ENCODE measurements at regions of chr3 and their contacts with region 1.

Region 1: DNA sequence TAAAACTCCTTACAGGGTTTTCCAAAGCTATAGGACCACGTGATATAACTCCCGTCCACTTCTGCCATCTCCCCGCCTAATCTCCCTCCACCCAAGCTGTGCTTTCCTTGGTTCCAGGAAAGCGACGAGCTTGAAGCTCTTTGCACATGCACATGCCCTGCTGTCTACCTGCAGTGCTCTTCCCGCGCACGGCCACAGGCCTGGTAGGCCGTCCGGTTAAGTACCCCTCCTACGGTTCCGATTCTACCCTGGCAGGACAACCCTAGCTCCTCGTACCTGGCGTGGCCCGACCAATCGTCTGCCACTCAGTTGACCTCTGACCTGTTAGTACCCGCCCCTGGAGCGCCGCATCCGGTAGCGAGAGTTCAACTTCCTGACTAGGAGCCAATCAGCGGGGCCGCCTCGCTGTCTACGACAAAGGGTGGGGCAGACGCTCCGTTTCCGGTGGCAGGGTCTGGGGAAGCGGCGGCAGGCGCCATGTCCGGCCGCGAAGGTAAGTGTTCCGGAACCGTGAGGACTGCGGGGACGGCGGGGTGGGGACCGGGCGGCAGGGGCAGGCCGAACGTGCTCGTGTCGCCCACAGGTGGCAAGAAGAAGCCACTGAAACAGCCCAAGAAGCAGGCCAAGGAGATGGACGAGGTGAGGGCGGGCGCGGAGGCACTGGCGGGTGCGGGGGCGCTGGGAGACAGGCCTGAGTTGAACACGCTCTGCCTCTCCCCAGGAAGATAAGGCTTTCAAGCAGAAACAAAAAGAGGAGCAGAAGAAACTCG is at the starts of genes CCDC51 and TMA7:
- H3K4me3 ChIP-seq: peak within 1 kb of the TSS; percentile 84
- H3K27ac ChIP-seq: peak within 1 kb of the TSS; percentile 67
- H3K4me1 ChIP-seq: no peaks in the 10 kb centered on the region
- CTCF ChIP-seq: peak; percentile 48; the same call in 1 of the 2 replicates

Region 2: DNA sequence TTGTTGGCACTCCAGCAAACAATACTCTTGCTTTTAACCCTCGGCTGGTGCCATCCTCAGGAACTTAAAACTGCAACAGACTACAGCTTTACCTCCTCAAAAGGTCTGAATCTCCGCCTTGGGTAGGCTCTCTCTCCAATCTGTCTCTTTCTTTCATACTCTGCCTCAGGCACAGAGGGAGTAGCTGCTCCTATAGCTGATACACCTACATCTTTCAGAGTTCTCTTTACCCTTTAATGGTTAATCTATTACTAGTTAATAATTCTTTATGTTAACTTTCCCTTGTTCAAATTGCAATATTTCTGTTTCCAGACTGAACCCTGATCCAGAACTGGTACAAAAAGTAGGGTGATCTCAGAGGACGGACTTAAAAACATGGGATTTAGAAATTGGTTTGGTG is 490.0 kb before region 1 on chr3:
- CTCF ChIA-PET with region 1: no interaction called
- POLR2A ChIA-PET with region 1: no interaction called
- H3K4me3 ChIP-seq: no peak overlapping the region
- H3K27ac ChIP-seq: no peak overlapping the region
- H3K4me1 ChIP-seq: 0 out of 2 replicates have a peak, but pooled peaks cover 1% of the 10 kb centered on the region
- CTCF ChIP-seq: no peak

Region 3: DNA sequence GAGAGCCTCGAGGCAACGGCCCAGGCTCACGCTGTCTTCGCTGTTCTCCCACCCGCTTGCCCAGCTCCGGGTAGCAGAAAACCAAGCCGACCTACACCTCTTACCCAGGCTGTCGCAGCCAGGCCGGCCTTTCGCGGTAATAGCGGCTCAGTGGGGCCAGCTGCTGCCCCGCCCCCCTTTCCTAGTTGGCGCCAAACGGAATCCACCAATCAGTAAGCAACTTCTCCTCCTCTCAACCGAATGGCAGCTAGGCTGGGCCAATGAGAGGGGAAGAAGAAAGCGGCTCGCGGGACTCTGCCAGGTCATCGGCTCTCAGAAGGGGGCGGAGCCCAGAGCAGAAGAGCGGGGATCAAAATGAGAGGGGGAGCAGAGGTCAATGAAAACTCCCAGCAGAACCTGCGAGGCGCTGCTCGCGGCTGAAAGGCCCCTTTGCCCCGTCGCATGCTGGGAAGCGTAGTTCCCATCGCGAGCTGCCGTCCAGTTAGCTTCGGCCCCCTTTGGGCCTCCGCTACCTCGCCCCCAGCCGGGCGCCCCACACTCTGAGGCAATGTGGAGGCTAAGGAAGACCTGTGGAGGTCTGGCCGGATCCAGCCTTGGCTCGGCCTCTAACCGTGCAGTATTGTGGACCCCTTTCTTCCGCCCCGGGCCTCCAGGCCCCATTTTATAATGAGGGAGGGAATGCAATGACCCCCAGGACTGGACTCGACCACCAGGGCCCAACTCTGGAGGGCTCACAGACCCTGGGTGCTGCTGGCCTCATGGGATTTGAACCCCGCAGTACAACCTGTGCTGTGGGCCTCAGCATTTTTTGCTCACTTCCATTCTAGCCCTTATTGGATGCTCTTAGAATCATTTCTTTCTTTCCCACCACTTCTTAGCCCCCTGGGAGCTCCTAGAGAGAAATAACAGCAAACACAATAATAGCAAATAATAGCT is 251.5 kb before region 1 on chr3 and contains the start of gene CDC25A:
- CTCF ChIA-PET with region 1: interaction called, 47 read pairs
- POLR2A ChIA-PET with region 1: interaction called, 5 read pairs
- H3K4me3 ChIP-seq: peak within 1 kb of the TSS; percentile 96
- H3K27ac ChIP-seq: peak within 1 kb of the TSS; percentile 85
- H3K4me1 ChIP-seq: no peaks in the 10 kb centered on the region
- CTCF ChIP-seq: 0 out of 2 replicates have a peak, but pooled peaks have one; percentile 19

Region 4: GRCh38 chr3:48268381-48269183 is 171.4 kb before region 1 on chr3:
- CTCF ChIA-PET with region 1: interaction called, 97 read pairs
- POLR2A ChIA-PET with region 1: interaction called, 5 read pairs
- H3K4me3 ChIP-seq: no peak overlapping the region
- H3K27ac ChIP-seq: no peak overlapping the region
- H3K4me1 ChIP-seq: no peaks in the 10 kb centered on the region
- CTCF ChIP-seq: no peak

Region 5: DNA sequence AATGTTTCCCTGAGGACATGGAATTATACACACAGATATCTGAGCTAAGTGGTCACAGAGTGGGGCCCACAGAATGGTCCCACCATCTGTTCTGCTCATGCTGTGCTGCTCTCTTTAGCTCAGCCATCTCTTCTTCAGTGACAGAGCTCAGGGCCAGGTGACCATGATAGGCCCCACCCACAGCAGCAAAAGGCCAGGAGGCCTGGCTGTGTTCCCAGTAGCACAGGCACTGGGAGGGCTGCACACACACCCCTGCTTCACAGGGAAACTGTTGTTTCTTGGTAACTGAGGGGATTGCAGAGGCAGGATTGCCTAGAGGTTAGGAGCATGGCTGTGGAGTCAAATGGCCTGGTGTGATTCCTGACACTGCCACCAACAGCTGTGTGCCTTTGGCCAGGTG is 72.8 kb before region 1 on chr3:
- CTCF ChIA-PET with region 1: interaction called, 10 read pairs
- POLR2A ChIA-PET with region 1: no interaction called
- H3K4me3 ChIP-seq: no peak overlapping the region
- H3K27ac ChIP-seq: no peak overlapping the region
- H3K4me1 ChIP-seq: no peaks in the 10 kb centered on the region
- CTCF ChIP-seq: no peak

Region 6: DNA sequence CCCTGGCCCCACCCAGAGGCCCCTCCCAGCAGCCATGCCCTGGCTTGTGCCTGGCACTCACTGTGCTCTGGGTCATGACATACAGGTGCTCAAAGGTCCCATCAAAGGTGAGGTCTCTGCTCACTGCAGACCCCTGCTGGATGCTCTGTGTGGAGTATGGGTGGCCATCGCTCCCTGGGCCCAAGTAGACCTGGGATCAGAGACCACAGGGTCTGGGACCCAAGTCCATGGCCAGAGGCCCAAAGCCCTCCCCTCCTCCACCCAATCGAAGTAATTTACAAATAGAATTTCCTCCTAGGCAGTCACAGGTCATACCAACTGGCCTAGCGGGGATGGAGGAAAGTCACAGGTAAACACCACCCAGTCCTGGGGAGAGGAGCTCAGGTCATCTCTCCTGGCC is 17.7 kb before region 1 on chr3:
- CTCF ChIA-PET with region 1: interaction called, 25 read pairs
- POLR2A ChIA-PET with region 1: interaction called, 3 read pairs
- H3K4me3 ChIP-seq: no peak overlapping the region
- H3K27ac ChIP-seq: no peak overlapping the region
- H3K4me1 ChIP-seq: no peaks in the 10 kb centered on the region
- CTCF ChIP-seq: 0 out of 2 replicates have a peak, but pooled peaks have one; percentile 10

Region 7: GRCh38 chr3:48528754-48529153 is 88.7 kb after region 1 on chr3:
- CTCF ChIA-PET with region 1: interaction called, 11 read pairs
- POLR2A ChIA-PET with region 1: no interaction called
- H3K4me3 ChIP-seq: no peak overlapping the region
- H3K27ac ChIP-seq: no peak overlapping the region
- H3K4me1 ChIP-seq: no peaks in the 10 kb centered on the region
- CTCF ChIP-seq: no peak

Region 8: GRCh38 chr3:48581621-48582481 is 141.8 kb after region 1 on chr3:
- CTCF ChIA-PET with region 1: no interaction called
- POLR2A ChIA-PET with region 1: no interaction called
- H3K4me3 ChIP-seq: no peak overlapping the region
- H3K27ac ChIP-seq: no peak overlapping the region
- H3K4me1 ChIP-seq: no peaks in the 10 kb centered on the region
- CTCF ChIP-seq: no peak

Region 9: GRCh38 chr3:48628277-48629017 is 188.4 kb after region 1 on chr3:
- CTCF ChIA-PET with region 1: no interaction called
- POLR2A ChIA-PET with region 1: no interaction called
- H3K4me3 ChIP-seq: no peak overlapping the region
- H3K27ac ChIP-seq: no peak overlapping the region
- H3K4me1 ChIP-seq: no peaks in the 10 kb centered on the region
- CTCF ChIP-seq: no peak

Region 10: DNA sequence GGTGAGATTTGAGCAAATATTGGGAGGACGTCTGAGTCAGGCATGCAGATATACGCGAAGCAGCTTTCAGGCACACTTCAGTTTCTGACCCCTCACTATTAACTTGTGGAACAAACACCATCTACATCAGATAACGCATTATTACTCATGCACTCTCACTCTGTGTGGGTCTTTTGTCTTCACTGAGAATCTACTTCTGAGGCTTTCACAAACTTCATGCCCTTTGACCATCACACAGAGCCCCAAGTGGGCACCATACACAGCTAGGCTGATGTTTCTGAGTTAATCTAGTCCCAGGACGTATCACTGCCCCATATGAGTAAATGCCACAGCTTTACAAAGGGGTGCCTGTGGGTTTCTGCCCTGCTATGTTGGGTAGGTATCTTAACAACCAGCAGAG is 316.6 kb after region 1 on chr3:
- CTCF ChIA-PET with region 1: no interaction called
- POLR2A ChIA-PET with region 1: no interaction called
- H3K4me3 ChIP-seq: no peak overlapping the region
- H3K27ac ChIP-seq: no peak overlapping the region
- H3K4me1 ChIP-seq: no peaks in the 10 kb centered on the region
- CTCF ChIP-seq: no peak